ENCODE measurements at regions of chr12 and their contacts with region 1.

Region 1: GRCh38 chr12:89882050-89882449 is 173.4 kb upstream of the ATP2B1 start:
- DNase-seq: peak; percentile 53
- H3K4me3 Mint-ChIP-seq: no peak overlapping the region
- H3K27ac Mint-ChIP-seq: peak overlapping the region; percentile 63
- H3K4me1 Mint-ChIP-seq: peaks cover 42% of the 10 kb centered on the region
- H3K27me3 Mint-ChIP-seq: no peaks in the 10 kb centered on the region

Region 2: GRCh38 chr12:89597770-89598169 is 284.3 kb before region 1 on chr12:
- CTCF ChIA-PET with region 1: no interaction called
- intact Hi-C with region 1: loop called (anchors 5 kb)
- DNase-seq: no peak
- H3K4me3 Mint-ChIP-seq: no peak overlapping the region
- H3K27ac Mint-ChIP-seq: peak overlapping the region; percentile 66
- H3K4me1 Mint-ChIP-seq: peaks cover 23% of the 10 kb centered on the region
- H3K27me3 Mint-ChIP-seq: no peaks in the 10 kb centered on the region

Region 3: GRCh38 chr12:89800435-89800834 is 81.6 kb before region 1 on chr12:
- CTCF ChIA-PET with region 1: no interaction called
- intact Hi-C with region 1: no loop called
- DNase-seq: no peak
- H3K4me3 Mint-ChIP-seq: no peak overlapping the region
- H3K27ac Mint-ChIP-seq: no peak overlapping the region
- H3K4me1 Mint-ChIP-seq: no peaks in the 10 kb centered on the region
- H3K27me3 Mint-ChIP-seq: no peaks in the 10 kb centered on the region

Region 4: GRCh38 chr12:89856431-89856830 is 25.6 kb before region 1 on chr12:
- CTCF ChIA-PET with region 1: no interaction called
- intact Hi-C with region 1: loop called (anchors 1 kb)
- DNase-seq: no peak
- H3K4me3 Mint-ChIP-seq: no peak overlapping the region
- H3K27ac Mint-ChIP-seq: no peak overlapping the region
- H3K4me1 Mint-ChIP-seq: peaks cover 42% of the 10 kb centered on the region
- H3K27me3 Mint-ChIP-seq: no peaks in the 10 kb centered on the region

Region 5: GRCh38 chr12:89935825-89936224 is 53.8 kb after region 1 on chr12:
- CTCF ChIA-PET with region 1: no interaction called
- intact Hi-C with region 1: loop called (anchors 2 kb)
- DNase-seq: no peak
- H3K4me3 Mint-ChIP-seq: no peak overlapping the region
- H3K27ac Mint-ChIP-seq: peak overlapping the region; percentile 53
- H3K4me1 Mint-ChIP-seq: peaks cover 28% of the 10 kb centered on the region
- H3K27me3 Mint-ChIP-seq: no peaks in the 10 kb centered on the region

Region 6: DNA sequence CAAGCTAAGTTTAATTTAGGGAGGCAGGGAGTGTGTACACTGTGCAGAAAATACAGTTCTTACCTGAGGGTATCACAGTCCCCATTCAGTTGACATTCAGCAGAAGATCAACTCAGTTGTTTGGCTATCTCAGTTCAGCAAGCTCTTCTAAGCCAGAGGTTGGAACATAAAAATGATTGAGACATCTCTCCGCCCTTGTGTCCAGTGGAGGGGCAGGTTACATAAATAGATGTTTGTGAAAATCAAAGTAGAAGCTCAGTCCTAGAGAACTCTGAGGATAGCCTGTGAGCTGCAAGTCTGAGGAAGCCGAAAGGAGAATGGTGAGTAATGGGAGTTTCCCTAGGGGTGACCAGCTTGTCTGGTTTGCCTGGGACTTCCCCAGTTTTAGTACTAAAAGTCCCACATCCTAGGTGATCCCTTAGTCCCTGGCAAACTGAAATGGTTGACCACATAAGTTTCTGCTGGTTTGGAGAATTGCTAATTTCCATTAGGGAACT is 78.0 kb after region 1 on chr12:
- CTCF ChIA-PET with region 1: no interaction called
- intact Hi-C with region 1: no loop called
- DNase-seq: peak; percentile 51
- H3K4me3 Mint-ChIP-seq: no peak overlapping the region
- H3K27ac Mint-ChIP-seq: no peak overlapping the region
- H3K4me1 Mint-ChIP-seq: peaks cover 14% of the 10 kb centered on the region
- H3K27me3 Mint-ChIP-seq: no peaks in the 10 kb centered on the region